Gastrocnemius medialis (tissue), 4 donors: ENCODE measurements at regions of chr10 and their contacts with region 1.

Region 1: DNA sequence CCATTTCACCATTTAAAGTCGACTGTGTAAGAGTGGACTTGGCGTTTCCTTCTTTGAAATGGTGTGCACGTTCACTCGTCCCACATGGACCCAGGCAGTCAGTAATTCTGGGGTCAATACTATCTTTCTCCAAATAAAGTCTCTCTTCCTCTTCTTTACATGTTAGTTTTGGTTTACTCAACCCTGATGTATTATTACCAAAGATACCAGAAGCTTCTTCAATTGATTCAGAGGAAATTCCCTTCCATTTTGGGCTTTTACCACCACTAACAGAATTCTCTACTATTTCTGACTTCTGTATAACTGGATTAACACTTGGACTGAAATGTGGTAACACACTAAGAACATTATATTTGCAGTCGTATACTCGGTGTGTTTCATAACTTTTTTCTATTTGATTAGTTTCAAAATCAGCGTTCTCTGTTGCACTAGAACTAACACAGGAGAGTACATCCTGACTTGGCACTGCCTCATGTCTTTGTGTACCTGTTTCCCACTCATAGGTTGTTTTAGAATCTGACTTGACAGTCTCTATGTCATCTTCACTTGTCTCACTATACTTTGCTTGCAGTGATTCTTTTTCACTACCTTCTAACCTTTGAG is 60.8 kb downstream of the LARP4B start:
- DNase-seq: no peak
- ATAC-seq: no peak
- H3K4me3 ChIP-seq: no peak overlapping the region
- H3K27ac ChIP-seq: peak overlapping the region; percentile 93 to 95 (median 94)
- H3K4me1 ChIP-seq: peaks cover 72 to 75% of the 10 kb centered on the region in 2 donors
- H3K27me3 ChIP-seq: no peaks in the 10 kb centered on the region
- CTCF ChIP-seq: no peak
- POLR2A ChIP-seq: no peak

Region 2: DNA sequence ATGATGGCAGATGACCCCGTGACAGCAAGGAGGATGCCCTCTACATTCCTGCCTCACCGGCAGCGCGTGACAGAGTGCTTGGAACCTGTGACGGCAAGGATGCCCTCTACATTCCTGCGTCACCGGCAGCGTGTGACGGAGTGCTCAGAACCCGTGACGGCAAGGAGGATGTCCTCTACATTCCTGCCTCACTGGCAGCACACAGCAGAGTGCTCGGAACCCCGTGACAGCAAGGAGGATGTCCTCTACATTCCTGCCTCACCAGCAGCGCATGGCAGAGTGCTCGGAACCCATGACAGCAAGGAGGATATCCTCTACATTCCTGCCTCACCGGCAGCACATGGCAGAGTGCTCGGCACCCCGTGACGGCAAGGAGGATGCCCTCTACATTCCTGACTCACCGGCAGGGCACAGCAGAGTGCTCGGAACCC is 412.2 kb before region 1 on chr10:
- in situ Hi-C with region 1: no loop called
- intact Hi-C with region 1: no loop called
- DNase-seq: no peak
- ATAC-seq: no peak
- H3K4me3 ChIP-seq: no peak overlapping the region
- H3K27ac ChIP-seq: no peak overlapping the region
- H3K4me1 ChIP-seq: peaks cover 8 to 19% of the 10 kb centered on the region in 2 donors
- H3K27me3 ChIP-seq: no peaks in the 10 kb centered on the region
- CTCF ChIP-seq: no peak
- POLR2A ChIP-seq: no peak

Region 3: GRCh38 chr10:931416-932318 is 61.0 kb after region 1 on chr10 and contains the start of gene LARP4B:
- in situ Hi-C with region 1: no loop called
- intact Hi-C with region 1: loop called (anchors 2 kb)
- DNase-seq: peak; percentile 93 to 97
- ATAC-seq: peak; percentile 92 to 93
- H3K4me3 ChIP-seq: peak within 1 kb of the TSS; percentile 75 to 95 (median 82)
- H3K27ac ChIP-seq: peak within 1 kb of the TSS; percentile 96 to 100 (median 98)
- H3K4me1 ChIP-seq: peaks cover 37 to 45% of the 10 kb centered on the region in 2 donors
- H3K27me3 ChIP-seq: no peaks in the 10 kb centered on the region
- CTCF ChIP-seq: no peak
- POLR2A ChIP-seq: peak; percentile 88 to 90
- total RNA-seq, gene LARP4B: 29.7 to 45.6 (median 40.0) TPM

Region 4: GRCh38 chr10:1026578-1026977 is 155.9 kb after region 1 on chr10:
- in situ Hi-C with region 1: no loop called
- intact Hi-C with region 1: loop called (anchors 5 kb)
- DNase-seq: peak in 1 of 2 donors; percentile 66
- ATAC-seq: peak; percentile 72 to 77
- H3K4me3 ChIP-seq: peak overlapping the region in 2 of 4 donors; percentile 40 to 47
- H3K27ac ChIP-seq: peak overlapping the region; percentile 85 to 95 (median 90)
- H3K4me1 ChIP-seq: peaks cover 37 to 38% of the 10 kb centered on the region in 2 donors
- H3K27me3 ChIP-seq: no peaks in the 10 kb centered on the region
- CTCF ChIP-seq: no peak
- POLR2A ChIP-seq: peak in 1 of 2 donors; percentile 40